Psoas muscle (tissue), 8 donors: ENCODE measurements at regions of chr10 and their contacts with region 1.

Region 1: GRCh38 chr10:34666008-34666705 is 148.9 kb downstream of the PARD3 start:
- DNase-seq: no peak
- ATAC-seq: peak; percentile 77 to 92 (median 88)
- H3K4me3 ChIP-seq: no peak overlapping the region
- H3K27ac ChIP-seq: no peak overlapping the region
- H3K4me1 ChIP-seq: peaks cover 36% of the 10 kb centered on the region
- H3K27me3 ChIP-seq: no peaks in the 10 kb centered on the region
- CTCF ChIP-seq: peak; percentile 69

Region 2: GRCh38 chr10:34585422-34586112 is 80.6 kb before region 1 on chr10:
- intact Hi-C with region 1: no loop called
- DNase-seq: no peak
- ATAC-seq: no peak
- H3K4me3 ChIP-seq: no peak overlapping the region
- H3K27ac ChIP-seq: no peak overlapping the region
- H3K4me1 ChIP-seq: peaks cover 26% of the 10 kb centered on the region
- H3K27me3 ChIP-seq: no peaks in the 10 kb centered on the region
- CTCF ChIP-seq: no peak

Region 3: GRCh38 chr10:34954168-34954567 is 288.0 kb after region 1 on chr10:
- intact Hi-C with region 1: loop called in 1 of 2 experiments (anchors 5 kb)
- DNase-seq: no peak
- ATAC-seq: no peak
- H3K4me3 ChIP-seq: no peak overlapping the region
- H3K27ac ChIP-seq: no peak overlapping the region
- H3K4me1 ChIP-seq: peaks cover 4% of the 10 kb centered on the region
- H3K27me3 ChIP-seq: no peaks in the 10 kb centered on the region
- CTCF ChIP-seq: no peak

Region 4: DNA sequence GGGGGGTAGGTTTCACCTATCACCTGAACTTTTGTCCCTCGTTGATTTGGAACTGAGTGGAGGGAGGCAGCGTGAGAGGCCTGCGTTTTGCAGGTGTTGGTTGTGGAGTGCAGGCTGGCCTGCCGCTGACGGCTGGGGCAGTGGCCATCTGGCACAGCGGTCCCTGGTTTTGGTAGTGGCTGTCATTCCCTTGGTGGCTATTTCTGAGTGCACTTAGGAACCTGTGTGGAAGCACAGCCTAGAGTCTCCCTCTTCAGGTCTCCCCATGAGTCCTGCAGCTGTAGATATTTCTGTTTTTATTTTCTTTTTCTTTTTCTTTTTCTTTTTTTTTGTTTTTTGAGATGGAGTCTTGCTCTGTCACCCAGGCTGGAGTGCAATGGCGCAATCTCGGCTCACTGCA is 294.8 kb after region 1 on chr10:
- intact Hi-C with region 1: loop called (anchors 5 kb)
- DNase-seq: no peak
- ATAC-seq: peak; percentile 79 to 96 (median 92)
- H3K4me3 ChIP-seq: no peak overlapping the region
- H3K27ac ChIP-seq: no peak overlapping the region
- H3K4me1 ChIP-seq: peaks cover 3% of the 10 kb centered on the region
- H3K27me3 ChIP-seq: no peaks in the 10 kb centered on the region
- CTCF ChIP-seq: peak; percentile 63